Activated CD4-positive, alpha-beta T cell treated with anti-CD3 and anti-CD28 coated beads for 36 hours (primary cell): ENCODE measurements at regions of chr9 and their contacts with region 1.

Region 1: GRCh38 chr9:123887837-123888236 is 42.1 kb downstream of the DENND1A start:
- DNase-seq: no peak
- ATAC-seq: no peak
- H3K4me3 Mint-ChIP-seq: no peak overlapping the region
- H3K27ac Mint-ChIP-seq: no peak overlapping the region
- H3K4me1 Mint-ChIP-seq: no peaks in the 10 kb centered on the region
- H3K27me3 Mint-ChIP-seq: no peaks in the 10 kb centered on the region

Region 2: GRCh38 chr9:123834889-123835562 is 52.8 kb before region 1 on chr9:
- CTCF ChIA-PET with region 1: no interaction called
- POLR2A ChIA-PET with region 1: no interaction called
- intact Hi-C with region 1: loop called in 1 of 2 experiments (anchors 5 kb)
- DNase-seq: no peak
- ATAC-seq: no peak
- H3K4me3 Mint-ChIP-seq: peak overlapping the region; percentile 7
- H3K27ac Mint-ChIP-seq: no peak overlapping the region
- H3K4me1 Mint-ChIP-seq: peaks cover 14% of the 10 kb centered on the region
- H3K27me3 Mint-ChIP-seq: no peaks in the 10 kb centered on the region

Region 3: DNA sequence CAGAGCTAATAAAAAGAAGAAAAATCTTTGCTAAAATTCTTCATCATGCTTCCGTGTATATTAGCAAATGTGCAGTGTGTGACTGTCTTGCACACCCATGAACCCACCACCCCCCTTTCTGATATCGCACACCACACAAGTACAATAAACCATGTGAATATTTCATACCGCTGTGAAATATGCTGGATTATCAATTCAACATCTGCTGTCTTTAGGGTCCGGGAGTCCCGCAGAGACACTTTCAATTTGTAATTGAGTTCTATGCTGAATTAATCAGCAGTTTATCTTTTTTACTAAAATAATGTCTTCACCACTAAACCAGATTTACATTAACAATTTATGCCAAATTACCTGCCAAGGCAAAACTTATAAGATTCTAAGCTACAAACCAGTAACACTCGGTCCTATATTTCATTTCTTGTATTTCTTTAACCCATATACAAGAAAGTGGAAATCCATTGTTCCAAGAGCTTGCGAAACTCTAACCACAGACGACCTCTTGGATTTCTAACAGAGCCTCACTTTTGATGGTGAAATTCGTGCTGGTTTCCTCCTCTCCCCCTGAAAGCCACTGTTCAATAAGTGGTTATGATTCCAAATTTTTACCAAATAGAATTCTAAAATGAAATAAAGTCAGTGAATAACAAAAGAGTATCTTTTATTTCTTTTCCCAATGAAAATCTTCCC is 483.2 kb after region 1 on chr9:
- CTCF ChIA-PET with region 1: no interaction called
- POLR2A ChIA-PET with region 1: no interaction called
- intact Hi-C with region 1: no loop called
- DNase-seq: no peak
- ATAC-seq: no peak
- H3K4me3 Mint-ChIP-seq: no peak overlapping the region
- H3K27ac Mint-ChIP-seq: no peak overlapping the region
- H3K4me1 Mint-ChIP-seq: peaks cover 54% of the 10 kb centered on the region
- H3K27me3 Mint-ChIP-seq: no peaks in the 10 kb centered on the region

Region 4: DNA sequence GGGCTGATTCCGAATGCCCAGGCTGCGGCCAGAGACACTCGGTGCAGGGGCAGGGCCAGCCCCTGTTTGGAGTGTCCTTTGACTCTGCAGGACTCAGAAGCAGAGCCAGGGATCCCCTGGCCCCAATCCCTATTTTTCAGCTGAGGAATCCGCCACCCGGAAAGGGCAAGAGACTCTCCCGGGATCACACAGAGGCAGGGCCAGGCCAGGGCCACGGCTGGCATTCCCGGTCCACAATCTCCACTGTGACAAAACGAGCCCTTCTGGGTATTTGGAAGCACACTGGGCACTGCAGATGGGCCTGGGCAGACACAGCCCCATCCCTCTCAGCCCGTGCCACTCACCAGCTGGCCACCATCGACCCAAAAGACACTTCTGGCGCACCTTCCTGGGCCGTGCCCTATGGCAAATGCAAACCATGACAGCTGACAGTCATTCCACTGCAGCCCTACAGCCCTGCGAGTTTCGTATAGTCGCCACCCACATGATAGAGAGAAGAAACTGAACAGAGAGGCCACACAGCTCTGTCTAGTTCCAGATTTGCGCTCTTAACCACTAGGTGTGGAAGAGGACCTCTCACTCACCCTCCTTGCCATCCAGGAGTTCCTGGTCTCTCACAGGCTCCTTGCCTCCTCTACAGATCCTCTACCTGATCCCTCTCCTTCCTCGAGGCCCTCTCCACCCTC is 606.1 kb after region 1 on chr9:
- CTCF ChIA-PET with region 1: no interaction called
- POLR2A ChIA-PET with region 1: no interaction called
- intact Hi-C with region 1: no loop called
- DNase-seq: no peak
- ATAC-seq: peak; percentile 19
- H3K4me3 Mint-ChIP-seq: no peak overlapping the region
- H3K27ac Mint-ChIP-seq: no peak overlapping the region
- H3K4me1 Mint-ChIP-seq: peaks cover 9% of the 10 kb centered on the region
- H3K27me3 Mint-ChIP-seq: no peaks in the 10 kb centered on the region

Region 5: GRCh38 chr9:124820698-124821623 is 933.1 kb after region 1 on chr9:
- CTCF ChIA-PET with region 1: no interaction called
- POLR2A ChIA-PET with region 1: no interaction called
- intact Hi-C with region 1: no loop called
- DNase-seq: no peak
- ATAC-seq: no peak
- H3K4me3 Mint-ChIP-seq: no peak overlapping the region
- H3K27ac Mint-ChIP-seq: no peak overlapping the region
- H3K4me1 Mint-ChIP-seq: peaks cover 8% of the 10 kb centered on the region
- H3K27me3 Mint-ChIP-seq: peaks cover 4% of the 10 kb centered on the region